ENCODE measurements at regions of chr1 and their contacts with region 1.

Region 1: DNA sequence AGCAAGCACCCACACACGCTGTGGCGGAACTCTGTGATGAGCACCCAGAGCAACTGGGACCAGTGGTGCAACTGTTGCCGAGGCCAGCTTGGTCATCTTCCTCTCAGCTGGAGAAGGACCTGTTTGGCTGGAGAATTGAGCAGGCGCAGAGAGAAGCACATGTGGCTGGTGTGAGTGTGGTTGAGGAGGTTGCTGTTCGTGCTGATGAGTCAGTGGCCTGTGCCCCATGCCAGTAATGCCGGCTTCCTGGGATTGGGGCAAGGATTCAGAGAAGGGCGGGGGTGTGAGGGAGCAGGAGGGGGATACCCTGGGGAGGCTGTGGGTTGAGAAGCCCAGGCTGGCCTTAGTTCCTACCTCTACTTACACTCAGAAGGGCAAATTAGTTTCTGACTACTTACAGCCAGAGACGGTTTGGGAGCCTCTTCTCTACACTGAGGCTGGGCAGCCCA is 57.5 kb upstream of the EPS8L3 start:
- DNase-seq: peak in 3 of 4 experiments; percentile 39 to 40 (median 40)
- ATAC-seq: no peak
- H3K4me3 ChIP-seq: no peak overlapping the region
- H3K27ac ChIP-seq: peak overlapping the region; percentile 80; the same call in 2 of the 3 replicates
- H3K4me1 ChIP-seq: peaks cover 60 to 71% of the 10 kb centered on the region in 2 experiments
- H3K27me3 ChIP-seq: no peaks in the 10 kb centered on the region
- CTCF ChIP-seq: no peak
- EP300 ChIP-seq: no peak
- POLR2A ChIP-seq: no peak
- RAD21 ChIP-seq: no peak

Region 2: DNA sequence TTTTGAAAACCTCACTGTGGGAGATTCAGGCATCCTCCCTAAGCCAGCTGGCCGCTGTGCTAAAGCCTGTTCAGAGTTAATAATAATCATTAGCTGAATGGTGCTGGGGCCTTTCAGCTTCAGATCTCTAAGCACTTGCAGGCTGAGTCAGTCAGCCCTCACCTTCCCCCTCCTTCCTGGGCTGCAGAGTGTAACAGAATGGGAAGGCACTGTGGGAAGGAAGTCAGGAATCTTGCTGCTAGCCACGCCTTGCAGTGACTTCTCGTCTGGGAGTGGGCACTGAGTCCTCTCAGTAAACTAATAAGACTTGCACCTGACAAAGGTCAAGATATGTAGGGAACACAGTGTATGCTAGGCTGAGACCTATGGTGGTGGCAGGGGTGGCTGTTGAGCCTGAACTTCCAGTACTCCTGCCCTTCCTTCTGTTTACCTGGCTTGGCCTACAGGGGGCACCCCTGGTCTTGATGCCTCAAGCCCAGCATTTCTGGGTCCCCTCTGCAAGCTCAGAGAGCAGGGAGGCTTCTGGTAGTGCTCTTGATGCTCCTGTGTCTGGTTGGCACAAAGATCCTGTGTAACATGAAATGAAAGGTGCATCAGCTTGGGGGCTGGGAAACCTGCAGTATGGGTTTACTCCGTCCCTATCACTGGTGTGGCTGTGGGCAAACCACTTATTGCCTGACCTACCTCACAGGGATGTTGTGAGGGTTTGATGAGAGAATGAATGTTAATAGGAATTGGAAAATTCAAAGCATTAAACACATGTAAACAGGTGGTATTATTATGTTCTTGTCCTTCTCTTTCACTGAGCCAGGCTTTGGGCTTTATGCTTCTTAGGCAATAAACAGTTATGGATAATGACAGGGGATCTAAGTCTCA is 321.3 kb before region 1 on chr1:
- CTCF ChIA-PET with region 1: no interaction called
- POLR2A ChIA-PET with region 1: no interaction called
- in situ Hi-C with region 1: no loop called
- intact Hi-C with region 1: no loop called
- DNase-seq: peak; percentile 54 to 81 (median 66)
- ATAC-seq: peak; percentile 79
- H3K4me3 ChIP-seq: no peak overlapping the region
- H3K27ac ChIP-seq: no peak overlapping the region
- H3K4me1 ChIP-seq: peaks cover 16 to 35% of the 10 kb centered on the region in 2 experiments
- H3K27me3 ChIP-seq: no peaks in the 10 kb centered on the region
- CTCF ChIP-seq: peak; percentile 72 to 86 (median 75)
- EP300 ChIP-seq: no peak
- POLR2A ChIP-seq: no peak
- RAD21 ChIP-seq: peak; percentile 48 to 59

Region 3: GRCh38 chr1:109832945-109833344 is 11.7 kb after region 1 on chr1:
- CTCF ChIA-PET with region 1: no interaction called
- POLR2A ChIA-PET with region 1: interaction called, 12 read pairs
- in situ Hi-C with region 1: no loop called
- intact Hi-C with region 1: no loop called
- DNase-seq: no peak
- ATAC-seq: no peak
- H3K4me3 ChIP-seq: no peak overlapping the region
- H3K27ac ChIP-seq: no peak overlapping the region
- H3K4me1 ChIP-seq: peaks cover 0 to 14% of the 10 kb centered on the region in 2 experiments; a peak in 2 of 5 replicates
- H3K27me3 ChIP-seq: no peaks in the 10 kb centered on the region
- CTCF ChIP-seq: no peak
- EP300 ChIP-seq: no peak
- POLR2A ChIP-seq: no peak
- RAD21 ChIP-seq: no peak

Region 4: GRCh38 chr1:109864047-109864822 is 43.0 kb after region 1 on chr1:
- CTCF ChIA-PET with region 1: no interaction called
- POLR2A ChIA-PET with region 1: no interaction called
- in situ Hi-C with region 1: no loop called
- intact Hi-C with region 1: loop called (anchors 5 kb)
- DNase-seq: peak; percentile 42 to 82 (median 52)
- ATAC-seq: peak; percentile 97
- H3K4me3 ChIP-seq: no peak overlapping the region
- H3K27ac ChIP-seq: peak overlapping the region; percentile 42; the same call in 2 of the 3 replicates
- H3K4me1 ChIP-seq: peaks cover 6 to 13% of the 10 kb centered on the region in 2 experiments; a peak in 3 of 5 replicates
- H3K27me3 ChIP-seq: no peaks in the 10 kb centered on the region
- CTCF ChIP-seq: peak in 1 of 3 experiments; percentile 18; a peak in 1 of 6 replicates
- EP300 ChIP-seq: 0 out of 2 replicates have a peak, but pooled peaks have one; percentile 15
- POLR2A ChIP-seq: no peak
- RAD21 ChIP-seq: peak in 1 of 2 experiments; percentile 7; a peak in 1 of 4 replicates

Region 5: GRCh38 chr1:109883248-109883955 is 62.2 kb after region 1 on chr1:
- CTCF ChIA-PET with region 1: no interaction called
- POLR2A ChIA-PET with region 1: no interaction called
- in situ Hi-C with region 1: no loop called
- intact Hi-C with region 1: no loop called
- DNase-seq: no peak
- ATAC-seq: no peak
- H3K4me3 ChIP-seq: no peak overlapping the region
- H3K27ac ChIP-seq: no peak overlapping the region
- H3K4me1 ChIP-seq: peaks cover 21 to 37% of the 10 kb centered on the region in 2 experiments
- H3K27me3 ChIP-seq: no peaks in the 10 kb centered on the region
- CTCF ChIP-seq: no peak
- EP300 ChIP-seq: no peak
- POLR2A ChIP-seq: no peak
- RAD21 ChIP-seq: no peak

Region 6: DNA sequence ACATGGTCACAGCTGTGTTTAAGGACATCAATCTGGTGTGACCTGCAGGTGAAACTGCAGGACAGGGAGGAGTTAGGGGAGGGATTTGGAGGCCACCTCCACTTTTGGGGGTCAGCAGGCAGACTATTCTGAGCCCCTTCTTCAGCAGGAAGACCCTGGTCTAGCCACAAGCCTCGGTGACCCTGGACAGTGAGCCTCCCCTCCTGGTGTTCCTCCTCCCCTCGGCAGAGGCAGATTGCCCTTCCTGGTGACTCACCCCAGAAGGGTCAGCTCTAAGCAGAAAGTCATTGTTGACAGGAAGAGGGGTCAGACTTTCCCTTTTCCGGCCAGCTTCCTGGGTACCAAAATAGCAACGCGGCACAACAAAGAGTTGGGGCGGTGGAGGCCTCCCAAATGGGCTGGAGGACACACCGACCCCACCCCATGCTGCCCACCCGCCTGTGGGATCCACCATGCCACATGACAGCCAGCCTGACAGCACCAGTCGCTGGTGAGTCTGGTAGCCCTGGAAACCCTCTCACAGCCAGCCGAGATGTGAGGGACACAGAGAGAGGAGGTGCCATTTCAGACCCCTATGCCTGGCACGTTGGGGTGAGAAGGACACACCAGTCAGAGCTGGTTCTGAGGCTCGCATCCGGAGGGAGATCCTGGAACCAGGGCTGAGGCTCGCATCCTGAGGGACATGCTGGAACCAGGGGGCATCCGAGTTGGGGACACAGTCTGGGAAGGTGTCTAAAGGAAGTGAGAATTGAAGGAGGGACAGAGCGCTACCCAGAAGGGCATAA is 74.7 kb after region 1 on chr1:
- CTCF ChIA-PET with region 1: no interaction called
- POLR2A ChIA-PET with region 1: no interaction called
- in situ Hi-C with region 1: no loop called
- intact Hi-C with region 1: no loop called
- DNase-seq: peak; percentile 80 to 91 (median 86)
- ATAC-seq: peak; percentile 92
- H3K4me3 ChIP-seq: peak overlapping the region; percentile 34
- H3K27ac ChIP-seq: peak overlapping the region; percentile 91
- H3K4me1 ChIP-seq: peaks cover 22 to 61% of the 10 kb centered on the region in 2 experiments
- H3K27me3 ChIP-seq: no peaks in the 10 kb centered on the region
- CTCF ChIP-seq: no peak
- EP300 ChIP-seq: peak; percentile 91
- POLR2A ChIP-seq: no peak; the same call in 1 of the 2 replicates
- RAD21 ChIP-seq: peak in 1 of 2 experiments; percentile 31; a peak in 2 of 4 replicates

Region 7: GRCh38 chr1:109923131-109923945 is 102.1 kb after region 1 on chr1:
- CTCF ChIA-PET with region 1: no interaction called
- POLR2A ChIA-PET with region 1: no interaction called
- in situ Hi-C with region 1: no loop called
- intact Hi-C with region 1: no loop called
- DNase-seq: peak; percentile 60 to 66 (median 63)
- ATAC-seq: peak; percentile 89
- H3K4me3 ChIP-seq: no peak overlapping the region
- H3K27ac ChIP-seq: no peak overlapping the region
- H3K4me1 ChIP-seq: peaks cover 9 to 32% of the 10 kb centered on the region in 2 experiments
- H3K27me3 ChIP-seq: no peaks in the 10 kb centered on the region
- CTCF ChIP-seq: peak; percentile 68 to 83 (median 76)
- EP300 ChIP-seq: no peak
- POLR2A ChIP-seq: no peak
- RAD21 ChIP-seq: peak in 1 of 2 experiments; percentile 71; a peak in 3 of 4 replicates

Measured in K562 (cell line).